ENCODE measurements at regions of chr20 and their contacts with region 1.

Region 1: GRCh38 chr20:1764136-1765033 is 106.8 kb upstream of the SIRPG start:
- DNase-seq: peak; percentile 80 to 94 (median 86)
- H3K4me3 ChIP-seq: no peak overlapping the region
- H3K27ac ChIP-seq: no peak overlapping the region
- H3K4me1 ChIP-seq: peaks cover 0 to 7% of the 10 kb centered on the region in 2 donors
- H3K27me3 ChIP-seq: no peaks in the 10 kb centered on the region
- CTCF ChIP-seq: peak; percentile 54 to 91 (median 78)
- POLR2A ChIP-seq: no peak

Region 2: GRCh38 chr20:2446845-2447244 is 682.5 kb after region 1 on chr20:
- intact Hi-C with region 1: loop called in 1 of 2 experiments (anchors 10 kb)
- DNase-seq: no peak
- H3K4me3 ChIP-seq: no peak overlapping the region
- H3K27ac ChIP-seq: no peak overlapping the region
- H3K4me1 ChIP-seq: no peaks in the 10 kb centered on the region
- H3K27me3 ChIP-seq: no peaks in the 10 kb centered on the region
- CTCF ChIP-seq: no peak
- POLR2A ChIP-seq: no peak